Activated T-helper 1 cell treated with anti-CD3 and anti-CD28 coated beads, Interleukin-12 subunit alpha, Interleukin-12 subunit beta, Interleukin-2, Interleukin-4 antibody, amounts not matched to agents 30 ng/mL and 10 ng/mL and 1 ng/mL, durations not matched to agents 14 hours and 24 hours and 36 hours (primary cell): ENCODE measurements at regions of chr15 and their contacts with region 1.

Region 1: DNA sequence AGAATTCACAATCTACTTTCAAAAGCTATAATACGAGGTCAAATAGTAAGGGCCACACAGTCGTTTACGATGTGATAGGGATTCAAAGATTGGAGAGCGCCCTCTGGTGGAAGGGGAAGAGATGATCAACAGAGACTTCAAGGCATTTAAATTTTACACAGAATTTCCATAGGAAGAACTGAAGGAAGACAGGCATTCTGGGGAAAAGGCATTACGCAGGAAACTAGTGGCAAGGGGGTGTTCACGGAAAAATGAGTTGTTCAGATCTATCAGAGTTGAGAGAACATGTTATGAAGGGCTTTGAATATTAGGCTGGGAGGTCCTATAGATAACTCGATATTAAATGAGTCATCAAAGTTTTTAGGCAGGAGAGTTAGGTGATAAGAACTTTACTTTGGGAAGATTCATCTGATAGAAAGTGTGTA is 128.7 kb downstream of the FRMD5 start:
- DNase-seq: peak; percentile 40
- H3K4me3 Mint-ChIP-seq: no peak overlapping the region
- H3K27ac Mint-ChIP-seq: no peak overlapping the region
- H3K4me1 Mint-ChIP-seq: peaks cover 7% of the 10 kb centered on the region
- H3K27me3 Mint-ChIP-seq: peaks cover 12% of the 10 kb centered on the region

Region 2: GRCh38 chr15:43872416-43873020 is 193.8 kb before region 1 on chr15:
- intact Hi-C with region 1: loop called (anchors 1 kb)
- DNase-seq: no peak
- H3K4me3 Mint-ChIP-seq: no peak overlapping the region
- H3K27ac Mint-ChIP-seq: no peak overlapping the region
- H3K4me1 Mint-ChIP-seq: no peaks in the 10 kb centered on the region
- H3K27me3 Mint-ChIP-seq: no peaks in the 10 kb centered on the region

Region 3: DNA sequence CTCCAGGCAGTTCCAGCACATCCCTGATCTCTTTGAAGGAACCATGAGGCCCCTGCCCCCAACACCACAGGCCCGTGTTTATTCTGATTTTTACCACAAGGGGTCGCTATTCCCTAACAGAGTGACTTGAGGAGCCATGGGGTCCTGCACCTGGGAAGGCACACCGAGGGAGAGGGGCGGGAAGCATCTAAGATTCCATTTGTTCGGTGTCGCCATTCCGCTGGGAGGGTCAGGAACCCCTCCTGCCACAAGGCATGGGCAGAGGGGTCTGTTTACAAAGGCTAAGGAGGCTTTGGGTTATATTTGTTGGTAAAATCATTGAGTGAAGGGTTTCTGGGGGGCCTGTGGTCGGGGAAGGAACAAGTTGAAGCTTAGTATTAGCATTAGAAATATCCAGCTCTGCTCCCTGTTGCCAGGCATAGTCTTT is 162.5 kb before region 1 on chr15:
- intact Hi-C with region 1: loop called (anchors 1 kb)
- DNase-seq: peak; percentile 41
- H3K4me3 Mint-ChIP-seq: no peak overlapping the region
- H3K27ac Mint-ChIP-seq: no peak overlapping the region
- H3K4me1 Mint-ChIP-seq: no peaks in the 10 kb centered on the region
- H3K27me3 Mint-ChIP-seq: no peaks in the 10 kb centered on the region

Region 4: DNA sequence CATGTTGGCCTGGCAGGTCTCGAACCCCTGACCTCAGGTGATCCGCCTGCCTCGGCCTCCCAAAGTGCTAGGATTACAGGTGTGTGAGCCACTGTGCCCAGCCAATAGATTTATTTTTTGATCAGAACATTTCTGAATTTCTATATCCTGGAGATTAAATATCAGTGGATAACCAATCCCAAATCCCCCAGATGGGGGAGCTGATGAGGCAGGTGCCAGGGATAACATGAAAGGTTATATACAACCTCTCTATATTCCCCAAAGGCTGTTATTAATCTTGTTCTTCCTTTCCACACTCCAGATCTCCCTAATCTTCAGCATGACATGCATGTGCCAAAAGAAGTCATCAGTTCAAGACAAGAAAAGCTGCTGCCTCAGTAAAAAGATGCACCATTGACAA is 127.3 kb before region 1 on chr15:
- intact Hi-C with region 1: loop called (anchors 1 kb)
- DNase-seq: no peak
- H3K4me3 Mint-ChIP-seq: no peak overlapping the region
- H3K27ac Mint-ChIP-seq: no peak overlapping the region
- H3K4me1 Mint-ChIP-seq: no peaks in the 10 kb centered on the region
- H3K27me3 Mint-ChIP-seq: peaks cover 8% of the 10 kb centered on the region